Activated naive CD4-positive, alpha-beta T cell treated with anti-CD3 and anti-CD28 coated beads for 36 hours (primary cell): ENCODE measurements at regions of chr19 and their contacts with region 1.

Region 1: DNA sequence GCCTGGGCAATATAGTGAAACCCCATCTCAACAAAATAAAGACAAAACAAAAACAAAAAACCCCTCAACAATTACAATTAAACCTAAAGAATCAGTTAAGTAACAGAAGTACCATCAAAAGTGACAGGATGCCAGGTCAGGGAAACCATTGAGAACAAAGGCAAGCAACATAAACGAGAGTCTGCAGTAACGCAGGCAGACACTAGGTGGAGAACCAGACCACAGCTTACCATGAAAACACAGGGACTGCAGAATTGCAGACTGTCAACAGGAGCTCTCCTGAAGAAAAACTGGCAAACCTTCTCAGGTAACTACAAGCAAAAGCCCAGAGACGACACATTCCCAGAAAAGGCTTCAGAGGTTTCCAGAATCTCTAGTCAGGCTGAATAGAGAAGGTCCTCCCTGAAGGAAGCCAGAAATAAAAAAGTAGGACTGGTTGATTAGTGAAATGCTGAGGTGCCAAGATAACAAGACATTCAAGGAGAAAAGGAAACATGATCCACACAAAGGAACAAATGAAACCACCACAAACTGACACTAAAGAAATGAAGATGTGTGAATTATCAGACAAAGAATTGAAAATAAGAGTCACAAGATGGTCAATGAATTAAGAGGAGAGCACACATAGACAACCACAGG is 2.2 kb upstream of the ZNF665 start:
- DNase-seq: peak; percentile 88
- H3K4me3 Mint-ChIP-seq: no peak overlapping the region
- H3K27ac Mint-ChIP-seq: peak overlapping the region; percentile 37
- H3K4me1 Mint-ChIP-seq: peaks cover 31% of the 10 kb centered on the region
- H3K27me3 Mint-ChIP-seq: peaks cover 2% of the 10 kb centered on the region

Region 2: DNA sequence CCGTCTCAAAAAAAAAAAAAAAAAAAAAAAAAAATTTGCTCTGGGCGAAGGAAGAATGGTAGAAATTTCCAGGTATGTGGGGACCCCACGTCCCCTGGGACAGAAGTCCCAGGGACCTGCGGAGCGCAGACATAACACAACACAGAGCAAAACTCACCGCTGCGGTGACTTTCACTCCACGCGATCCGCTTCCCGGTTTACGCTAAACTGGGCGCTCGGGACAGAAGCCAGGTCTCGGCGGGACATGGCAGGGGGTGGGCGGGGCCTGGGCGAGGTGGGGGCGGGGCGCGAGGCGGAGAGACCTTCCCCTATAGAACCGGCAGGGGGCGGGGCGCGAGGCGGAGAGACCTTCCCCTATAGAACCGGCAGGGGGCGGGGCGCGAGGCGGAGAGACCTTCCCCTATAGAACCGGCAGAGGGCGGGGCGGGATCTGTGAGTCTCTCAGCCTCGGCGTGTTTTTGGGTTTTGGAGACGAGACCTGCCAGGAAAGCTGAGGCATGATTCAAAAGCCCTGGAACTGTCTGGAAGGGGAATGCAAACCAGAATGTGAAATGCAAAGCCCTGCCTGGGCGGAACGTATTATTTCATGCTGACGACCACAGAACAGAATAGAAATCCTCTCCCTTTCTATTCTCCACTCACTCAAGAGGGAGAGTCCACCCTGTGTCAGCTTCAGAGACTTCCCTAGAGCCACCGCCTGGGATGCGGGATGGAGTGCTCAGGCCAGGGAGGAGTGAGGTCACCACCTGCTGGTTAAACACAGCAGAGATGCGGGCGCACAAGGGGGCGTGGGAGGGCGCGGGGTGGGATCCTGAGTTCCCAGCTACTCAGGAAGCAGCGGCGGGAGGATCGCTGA is 201.8 kb before region 1 on chr19:
- CTCF ChIA-PET with region 1: no interaction called
- intact Hi-C with region 1: loop called (anchors 5 kb)
- DNase-seq: peak; percentile 91
- H3K4me3 Mint-ChIP-seq: peak overlapping the region; percentile 77
- H3K27ac Mint-ChIP-seq: no peak overlapping the region
- H3K4me1 Mint-ChIP-seq: peaks cover 13% of the 10 kb centered on the region
- H3K27me3 Mint-ChIP-seq: peaks cover 2% of the 10 kb centered on the region

Region 3: GRCh38 chr19:53254411-53255341 is 59.3 kb after region 1 on chr19 and contains the start of gene ZNF677:
- CTCF ChIA-PET with region 1: no interaction called
- intact Hi-C with region 1: loop called (anchors 1 kb)
- DNase-seq: peak; percentile 91
- H3K4me3 Mint-ChIP-seq: peak within 1 kb of the TSS; percentile 83
- H3K27ac Mint-ChIP-seq: no peak within 1 kb of the TSS
- H3K4me1 Mint-ChIP-seq: peaks cover 7% of the 10 kb centered on the region
- H3K27me3 Mint-ChIP-seq: peaks cover 8% of the 10 kb centered on the region
- total RNA-seq, gene ZNF677: 4.0 to 5.4 TPM

Region 4: DNA sequence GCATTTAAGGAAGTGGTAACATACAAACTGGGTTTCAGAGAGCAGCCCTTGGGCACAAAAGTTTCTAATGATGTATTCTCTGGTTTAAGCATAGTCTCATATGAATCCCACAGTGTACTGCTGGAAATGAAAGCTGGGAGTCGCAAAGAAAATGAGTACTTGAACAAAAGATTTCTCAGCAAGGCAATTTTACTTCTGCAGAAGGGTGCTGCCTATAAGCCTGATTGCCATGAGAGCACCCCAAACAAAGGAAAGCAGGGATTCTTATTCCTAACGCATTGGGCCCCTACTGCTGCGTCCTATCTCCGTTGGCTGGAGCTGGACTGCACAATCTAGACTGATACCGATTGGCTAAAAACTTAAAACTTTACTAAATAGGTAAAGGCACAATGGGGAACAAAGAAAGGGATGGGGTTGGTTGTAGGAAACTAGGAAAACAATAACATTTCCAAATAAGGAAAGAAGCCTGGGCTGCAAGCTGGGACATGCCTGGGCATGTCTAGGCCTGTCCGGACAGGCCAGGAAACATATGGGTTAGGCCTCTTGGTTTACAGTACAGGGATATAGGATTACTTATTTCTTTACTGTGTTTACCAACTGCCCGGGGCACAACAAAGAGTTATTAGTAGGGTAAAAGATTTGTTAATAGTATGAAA is 99.5 kb after region 1 on chr19:
- CTCF ChIA-PET with region 1: no interaction called
- intact Hi-C with region 1: no loop called
- DNase-seq: no peak
- H3K4me3 Mint-ChIP-seq: no peak overlapping the region
- H3K27ac Mint-ChIP-seq: peak overlapping the region; percentile 63
- H3K4me1 Mint-ChIP-seq: no peaks in the 10 kb centered on the region
- H3K27me3 Mint-ChIP-seq: no peaks in the 10 kb centered on the region

Region 5: DNA sequence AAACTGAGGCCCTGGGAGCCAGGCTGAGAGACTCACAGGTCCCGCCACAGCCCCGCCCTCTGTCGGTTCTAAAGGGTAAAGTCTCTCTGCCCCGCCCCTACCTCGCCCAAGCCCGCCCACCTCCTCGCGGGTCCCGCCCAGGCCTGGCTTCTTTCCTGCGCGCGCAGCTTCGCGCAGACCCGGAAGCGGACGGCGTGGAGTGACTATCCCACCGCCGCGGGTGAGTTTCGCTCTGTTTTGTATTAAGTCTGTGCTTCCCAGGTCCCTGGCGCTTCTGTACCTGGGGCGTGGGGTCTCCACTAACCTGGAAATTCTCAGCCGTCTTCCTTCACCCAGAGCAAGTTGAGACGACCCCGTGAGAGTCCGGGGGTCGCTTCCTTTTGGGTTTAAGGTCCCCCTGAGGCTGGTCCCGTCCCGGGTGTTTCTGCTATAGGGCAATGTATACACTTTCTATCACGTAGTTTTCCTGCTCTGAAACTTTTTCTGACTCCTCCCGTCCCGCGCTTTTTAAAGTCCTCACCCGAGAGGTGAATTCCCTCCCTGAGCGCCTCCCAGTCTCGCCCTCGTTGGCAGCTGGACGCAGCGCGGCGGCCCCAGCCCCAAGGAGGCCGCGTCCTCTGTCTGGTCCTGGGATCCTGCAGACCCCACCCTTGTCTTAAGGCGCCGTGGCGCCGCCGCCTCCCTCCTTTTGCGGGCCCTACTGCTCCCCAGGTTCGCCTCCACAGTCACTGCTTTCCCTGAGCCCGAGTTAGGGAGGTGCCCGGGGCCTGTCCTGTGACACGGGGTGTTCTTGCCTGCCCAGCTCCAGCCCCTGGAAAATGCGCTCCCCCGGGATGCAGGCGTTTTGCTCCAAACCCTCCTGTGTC is 199.8 kb after region 1 on chr19 and contains the start of gene ZNF765:
- CTCF ChIA-PET with region 1: no interaction called
- intact Hi-C with region 1: loop called (anchors 10 kb)
- DNase-seq: peak; percentile 97
- H3K4me3 Mint-ChIP-seq: peak within 1 kb of the TSS; percentile 88
- H3K27ac Mint-ChIP-seq: peak within 1 kb of the TSS; percentile 90
- H3K4me1 Mint-ChIP-seq: peaks cover 27% of the 10 kb centered on the region
- H3K27me3 Mint-ChIP-seq: no peaks in the 10 kb centered on the region
- total RNA-seq, gene ZNF765: 7.9 to 8.0 TPM

Region 6: DNA sequence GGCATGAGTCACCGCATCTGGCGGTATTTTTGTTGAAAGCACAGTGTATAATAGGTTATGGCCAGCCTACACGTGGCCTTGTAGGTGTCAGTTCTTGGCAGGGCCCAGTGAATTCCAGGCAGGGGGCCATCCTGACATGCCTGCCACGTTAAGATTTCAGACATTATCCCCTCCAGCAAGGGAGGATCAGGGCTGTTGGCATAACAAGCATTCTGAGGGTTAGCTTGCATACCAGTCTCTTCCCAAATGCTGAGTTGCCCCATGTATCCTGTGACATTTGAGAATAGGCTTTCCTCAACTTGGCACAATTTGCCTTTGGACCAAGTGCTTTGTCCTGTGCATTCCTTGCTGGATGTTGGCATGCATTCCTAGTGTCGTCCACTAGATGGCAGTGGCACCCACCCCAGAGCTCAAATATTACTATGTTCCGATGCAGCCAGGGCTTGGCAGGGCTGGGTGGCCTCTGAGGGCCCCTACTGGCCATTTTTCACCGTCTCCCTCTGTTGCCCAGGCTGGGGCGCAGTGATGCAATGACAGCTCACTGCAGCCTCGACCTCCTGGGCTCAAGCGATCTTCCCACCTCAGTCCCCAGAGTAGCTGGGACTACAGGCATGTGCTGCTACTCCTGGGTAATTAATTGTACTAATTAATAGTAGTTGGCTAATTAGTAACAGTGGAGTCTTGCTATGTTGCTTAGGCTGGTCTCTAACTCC is 597.5 kb after region 1 on chr19:
- CTCF ChIA-PET with region 1: interaction called, 3 read pairs
- intact Hi-C with region 1: loop called (anchors 1 kb)
- DNase-seq: peak; percentile 86
- H3K4me3 Mint-ChIP-seq: no peak overlapping the region
- H3K27ac Mint-ChIP-seq: no peak overlapping the region
- H3K4me1 Mint-ChIP-seq: no peaks in the 10 kb centered on the region
- H3K27me3 Mint-ChIP-seq: no peaks in the 10 kb centered on the region

Region 7: DNA sequence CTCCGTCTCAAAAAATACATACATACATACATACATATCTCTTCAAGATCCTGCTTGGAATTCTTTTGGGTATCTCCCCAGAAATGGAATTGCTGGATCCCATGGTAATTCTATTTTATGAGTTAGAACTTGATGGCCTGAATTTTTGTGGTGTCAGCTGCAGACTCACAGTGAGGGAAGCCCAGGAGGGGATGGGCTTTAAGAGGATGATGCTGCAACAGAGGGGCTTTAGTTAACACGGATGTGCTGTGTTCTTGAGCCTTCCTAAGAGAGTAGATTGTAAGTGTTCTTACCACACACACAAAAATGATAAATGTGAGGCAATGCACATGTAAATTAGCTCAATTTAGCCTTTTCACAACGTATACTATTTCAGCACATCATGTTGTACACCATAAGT is 827.8 kb after region 1 on chr19:
- CTCF ChIA-PET with region 1: no interaction called
- intact Hi-C with region 1: loop called (anchors 5 kb)
- DNase-seq: no peak
- H3K4me3 Mint-ChIP-seq: no peak overlapping the region
- H3K27ac Mint-ChIP-seq: no peak overlapping the region
- H3K4me1 Mint-ChIP-seq: peaks cover 2% of the 10 kb centered on the region
- H3K27me3 Mint-ChIP-seq: peaks cover 33% of the 10 kb centered on the region